ENCODE measurements at regions of chr15 and their contacts with region 1.

Region 1: DNA sequence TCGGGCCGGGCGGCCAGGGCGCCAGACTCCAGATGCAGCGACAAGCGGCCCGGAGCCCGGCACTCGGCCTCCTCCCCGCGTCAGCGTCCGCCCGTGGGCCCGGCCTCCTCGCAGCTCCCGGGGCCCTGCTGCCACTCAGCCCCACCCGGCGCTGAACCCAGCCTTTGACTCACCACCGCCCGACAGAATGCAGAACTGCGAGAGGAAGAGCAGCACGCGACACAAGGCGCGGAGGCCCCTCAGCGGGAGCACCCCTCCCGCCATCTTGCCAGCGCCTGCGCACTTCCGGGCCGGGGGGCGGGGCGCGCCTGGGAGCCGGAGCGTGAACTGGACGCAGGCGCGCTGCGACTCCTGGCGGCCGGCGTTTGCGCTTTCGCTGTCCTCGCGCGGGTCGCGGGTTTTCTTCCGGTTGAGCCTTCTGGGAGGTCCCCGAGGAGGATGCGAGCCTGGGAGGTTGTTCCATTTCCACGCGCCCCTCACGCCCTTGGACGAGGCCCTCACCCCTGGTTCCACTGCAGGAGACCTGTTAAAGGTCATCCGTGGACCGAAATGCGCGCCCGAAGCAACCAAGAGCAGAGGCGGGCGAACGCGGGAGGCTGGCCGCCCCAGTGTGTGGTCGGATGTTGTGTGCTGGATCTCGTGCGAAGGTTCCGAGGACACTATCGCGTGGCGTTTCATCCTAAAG is at the start of gene TM2D3:
- DNase-seq: peak; percentile 98
- total RNA-seq, gene TM2D3: 39.9 to 44.1 TPM

Region 2: GRCh38 chr15:101294731-101295606 is 357.3 kb before region 1 on chr15 and contains the start of gene SNRPA1:
- intact Hi-C with region 1: loop called (anchors 5 kb)
- DNase-seq: peak; percentile 100
- total RNA-seq, gene SNRPA1: 33.6 to 38.2 TPM

Region 3: GRCh38 chr15:101307048-101307896 is 345.0 kb before region 1 on chr15:
- intact Hi-C with region 1: loop called in 1 of 2 experiments (anchors 5 kb)
- DNase-seq: peak; percentile 71